GM12878 (cell line): ENCODE measurements at regions of chr1 and their contacts with region 1.

Region 1: GRCh38 chr1:242225776-242226573 is 227.1 kb upstream of the MAP1LC3C start:
- DNase-seq: no peak
- ATAC-seq: peak; percentile 81
- H3K4me3 ChIP-seq: no peak overlapping the region
- H3K27ac ChIP-seq: peak overlapping the region; percentile 57; the same call in 1 of the 2 replicates
- H3K4me1 ChIP-seq: no peaks in the 10 kb centered on the region
- H3K27me3 ChIP-seq: no peaks in the 10 kb centered on the region
- CTCF ChIP-seq: no peak
- EP300 ChIP-seq: no peak
- POLR2A ChIP-seq: no peak
- RAD21 ChIP-seq: no peak

Region 2: GRCh38 chr1:242185731-242186130 is 40.2 kb before region 1 on chr1:
- CTCF ChIA-PET with region 1: no interaction called
- POLR2A ChIA-PET with region 1: no interaction called
- RAD21 ChIA-PET with region 1: no interaction called
- SMC1A ChIA-PET with region 1: no interaction called
- in situ Hi-C with region 1: no loop called
- intact Hi-C with region 1: loop called (anchors 2 kb)
- DNase-seq: no peak
- ATAC-seq: peak; percentile 70
- H3K4me3 ChIP-seq: no peak overlapping the region
- H3K27ac ChIP-seq: no peak overlapping the region
- H3K4me1 ChIP-seq: no peaks in the 10 kb centered on the region
- H3K27me3 ChIP-seq: no peaks in the 10 kb centered on the region
- CTCF ChIP-seq: no peak
- EP300 ChIP-seq: no peak
- POLR2A ChIP-seq: no peak
- RAD21 ChIP-seq: no peak

Region 3: GRCh38 chr1:242318140-242318539 is 92.2 kb after region 1 on chr1:
- CTCF ChIA-PET with region 1: no interaction called
- POLR2A ChIA-PET with region 1: no interaction called
- RAD21 ChIA-PET with region 1: no interaction called
- SMC1A ChIA-PET with region 1: no interaction called
- in situ Hi-C with region 1: no loop called
- intact Hi-C with region 1: no loop called
- DNase-seq: no peak
- ATAC-seq: no peak
- H3K4me3 ChIP-seq: no peak overlapping the region
- H3K27ac ChIP-seq: no peak overlapping the region
- H3K4me1 ChIP-seq: no peaks in the 10 kb centered on the region
- H3K27me3 ChIP-seq: no peaks in the 10 kb centered on the region
- CTCF ChIP-seq: no peak
- EP300 ChIP-seq: no peak
- POLR2A ChIP-seq: no peak
- RAD21 ChIP-seq: no peak